ENCODE measurements at regions of chr11 and their contacts with region 1.

Region 1: DNA sequence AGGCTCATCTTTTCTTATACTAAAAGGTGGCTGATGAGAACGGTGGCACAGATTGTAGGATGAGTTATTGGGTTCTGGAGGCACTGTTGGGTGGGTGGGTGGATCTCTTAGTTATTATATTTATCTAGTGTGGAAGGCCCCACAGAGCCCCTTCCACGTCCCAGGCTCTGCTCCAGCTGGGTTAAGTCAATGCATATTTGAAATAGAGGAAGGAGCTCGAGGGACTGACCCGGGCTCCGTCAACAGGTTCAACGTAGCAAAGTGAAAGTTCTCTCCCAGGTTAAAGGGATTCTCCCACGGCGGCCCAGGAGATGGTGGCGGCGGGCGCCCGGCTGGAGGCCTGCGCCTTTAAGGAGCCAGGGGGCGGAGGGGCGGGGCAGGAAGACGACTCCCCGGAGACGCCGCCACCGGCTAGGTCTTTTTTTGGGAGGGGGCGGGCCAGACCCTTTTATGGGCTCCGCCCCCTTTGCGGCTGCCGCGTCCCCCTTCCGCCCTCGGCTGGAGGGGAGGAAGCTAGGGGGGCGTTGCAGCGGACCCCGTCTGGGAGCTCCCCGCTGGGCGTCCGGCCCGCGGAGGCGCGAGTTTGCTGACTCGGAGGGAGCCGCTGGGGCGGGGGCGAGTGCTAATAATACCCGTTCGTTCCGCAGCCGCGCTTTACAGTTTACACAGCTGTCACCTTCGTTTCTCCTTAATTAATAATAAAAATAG is 1.5 kb upstream of the INPPL1 start:
- DNase-seq: peak; percentile 96
- H3K4me3 Mint-ChIP-seq: peak overlapping the region; percentile 73
- H3K27ac Mint-ChIP-seq: peak overlapping the region; percentile 75
- H3K4me1 Mint-ChIP-seq: peaks cover 20% of the 10 kb centered on the region
- H3K27me3 Mint-ChIP-seq: peaks cover 3% of the 10 kb centered on the region

Region 2: GRCh38 chr11:71448257-71449171 is 774.5 kb before region 1 on chr11 and contains the start of gene DHCR7:
- CTCF ChIA-PET with region 1: no interaction called
- intact Hi-C with region 1: loop called (anchors 5 kb)
- DNase-seq: peak; percentile 93
- H3K4me3 Mint-ChIP-seq: peak within 1 kb of the TSS; percentile 91
- H3K27ac Mint-ChIP-seq: peak within 1 kb of the TSS; percentile 86
- H3K4me1 Mint-ChIP-seq: peaks cover 40% of the 10 kb centered on the region
- H3K27me3 Mint-ChIP-seq: no peaks in the 10 kb centered on the region
- total RNA-seq, gene DHCR7: 52.0 to 58.7 TPM

Region 3: GRCh38 chr11:71928737-71929452 is 294.2 kb before region 1 on chr11 and contains the start of gene RNF121:
- CTCF ChIA-PET with region 1: no interaction called
- intact Hi-C with region 1: loop called (anchors 2 kb)
- DNase-seq: peak; percentile 99
- H3K4me3 Mint-ChIP-seq: peak within 1 kb of the TSS; percentile 96
- H3K27ac Mint-ChIP-seq: peak within 1 kb of the TSS; percentile 100
- H3K4me1 Mint-ChIP-seq: peaks cover 51% of the 10 kb centered on the region
- H3K27me3 Mint-ChIP-seq: no peaks in the 10 kb centered on the region
- total RNA-seq, gene RNF121: 15.4 to 16.8 TPM

Region 4: DNA sequence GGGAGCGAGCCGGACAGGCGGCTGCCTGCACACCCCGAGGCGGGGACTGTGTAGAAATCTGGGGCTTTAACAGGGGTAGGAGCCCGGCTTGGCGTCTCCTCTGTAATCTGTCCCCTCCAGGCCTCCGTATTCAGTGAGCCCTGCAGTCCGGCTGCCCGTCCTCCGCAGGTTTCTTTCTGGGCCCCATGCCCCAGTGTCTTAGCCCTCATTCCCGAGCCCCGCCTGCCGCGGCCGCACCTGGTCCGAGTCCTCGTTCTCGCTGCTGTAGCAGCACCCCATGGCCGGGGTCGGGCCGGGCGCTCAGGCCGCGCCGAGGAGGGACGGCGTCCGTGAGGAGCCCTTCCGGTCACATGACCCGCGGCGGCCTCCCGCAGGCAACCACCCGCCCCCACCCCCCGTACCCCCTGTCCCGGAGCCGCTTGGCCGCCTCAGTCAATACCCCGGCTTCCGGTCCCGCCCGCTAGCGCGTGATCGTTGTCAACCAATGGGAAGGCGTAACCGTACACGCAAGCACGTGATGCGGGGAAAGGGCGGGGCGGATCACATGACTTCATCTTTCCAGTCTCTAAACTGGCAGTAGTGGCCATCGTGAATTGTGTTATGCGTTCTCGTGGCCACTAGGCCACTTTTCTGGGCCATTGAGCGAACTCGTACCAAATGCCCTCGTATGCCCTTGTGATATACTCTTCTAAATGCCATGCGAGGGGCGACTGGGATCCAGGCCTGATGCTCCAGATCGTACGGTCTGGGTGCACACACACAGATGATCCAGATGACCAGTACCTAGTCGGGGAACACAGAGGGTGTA is 119.9 kb before region 1 on chr11 and contains the start of gene LAMTOR1:
- CTCF ChIA-PET with region 1: no interaction called
- intact Hi-C with region 1: loop called (anchors 2 kb)
- DNase-seq: peak; percentile 100
- H3K4me3 Mint-ChIP-seq: peak within 1 kb of the TSS; percentile 87
- H3K27ac Mint-ChIP-seq: peak within 1 kb of the TSS; percentile 77
- H3K4me1 Mint-ChIP-seq: peaks cover 36% of the 10 kb centered on the region
- H3K27me3 Mint-ChIP-seq: no peaks in the 10 kb centered on the region
- total RNA-seq, gene LAMTOR1: 39.1 to 41.8 TPM

Region 5: GRCh38 chr11:72238040-72238450 is 15.0 kb after region 1 on chr11:
- CTCF ChIA-PET with region 1: interaction called, 4 read pairs
- intact Hi-C with region 1: loop called (anchors 2 kb)
- DNase-seq: peak; percentile 66
- H3K4me3 Mint-ChIP-seq: no peak overlapping the region
- H3K27ac Mint-ChIP-seq: no peak overlapping the region
- H3K4me1 Mint-ChIP-seq: peaks cover 12% of the 10 kb centered on the region
- H3K27me3 Mint-ChIP-seq: peaks cover 36% of the 10 kb centered on the region

Region 6: DNA sequence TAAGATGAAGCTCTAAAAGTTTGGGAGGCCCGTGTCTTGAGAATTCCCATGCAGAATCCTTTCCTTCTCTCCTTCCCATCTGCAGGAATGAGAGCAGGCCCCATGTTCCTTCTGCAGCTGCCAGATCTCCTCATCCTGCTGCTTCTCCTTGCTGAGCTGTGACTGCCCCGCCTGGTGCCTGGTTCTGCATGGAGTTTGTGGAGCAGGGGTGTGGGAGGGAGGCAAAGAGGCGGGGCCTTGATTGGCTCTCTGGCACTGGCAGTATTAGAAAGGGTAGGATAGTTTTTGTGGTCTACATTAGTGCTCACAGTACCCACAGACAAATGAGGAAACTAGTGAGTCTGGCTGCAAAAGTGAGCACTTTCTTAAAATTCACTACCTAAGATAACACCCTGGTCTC is 302.4 kb after region 1 on chr11:
- CTCF ChIA-PET with region 1: no interaction called
- intact Hi-C with region 1: no loop called
- DNase-seq: no peak
- H3K4me3 Mint-ChIP-seq: no peak overlapping the region
- H3K27ac Mint-ChIP-seq: no peak overlapping the region
- H3K4me1 Mint-ChIP-seq: peaks cover 7% of the 10 kb centered on the region
- H3K27me3 Mint-ChIP-seq: no peaks in the 10 kb centered on the region

Measured in activated naive CD4-positive, alpha-beta T cell treated with anti-CD3 and anti-CD28 coated beads for 36 hours (primary cell).